Colonic mucosa (tissue), 4 donors: ENCODE measurements at regions of chr15 and their contacts with region 1.

Region 1: GRCh38 chr15:92097474-92098178 is 244.1 kb downstream of the SLCO3A1 start:
- DNase-seq: peak; percentile 60
- H3K4me3 ChIP-seq: no peak overlapping the region
- H3K27ac ChIP-seq: no peak overlapping the region
- H3K4me1 ChIP-seq: no peaks in the 10 kb centered on the region
- H3K27me3 ChIP-seq: no peaks in the 10 kb centered on the region
- CTCF ChIP-seq: peak; percentile 64

Region 2: DNA sequence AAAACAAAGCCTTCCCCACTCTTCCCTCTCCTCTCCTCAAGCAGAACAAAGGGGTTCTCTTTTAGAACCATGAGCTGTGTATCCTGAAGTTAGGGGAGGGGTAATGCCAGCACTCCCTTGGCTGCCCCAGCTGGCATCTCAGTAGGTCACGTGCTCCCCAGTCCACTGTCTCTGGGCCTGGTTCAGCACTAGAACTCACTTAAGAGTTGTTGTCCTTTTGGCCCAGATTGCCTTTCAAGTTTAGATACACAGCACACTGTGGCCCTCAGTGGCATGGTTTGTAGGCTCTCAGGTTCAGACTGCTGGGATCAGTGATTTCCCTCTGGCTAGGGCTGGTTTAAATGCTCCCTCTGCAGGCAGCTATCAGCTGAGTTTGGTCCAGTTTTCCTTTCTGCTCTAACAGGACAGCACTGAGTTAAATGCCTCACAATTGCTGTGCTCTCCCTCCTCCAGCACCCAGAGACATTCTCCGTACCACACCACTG is 107.7 kb after region 1 on chr15:
- intact Hi-C with region 1: loop called (anchors 5 kb)
- DNase-seq: no peak
- H3K4me3 ChIP-seq: no peak overlapping the region
- H3K27ac ChIP-seq: no peak overlapping the region
- H3K4me1 ChIP-seq: no peaks in the 10 kb centered on the region
- H3K27me3 ChIP-seq: no peaks in the 10 kb centered on the region
- CTCF ChIP-seq: no peak

Region 3: DNA sequence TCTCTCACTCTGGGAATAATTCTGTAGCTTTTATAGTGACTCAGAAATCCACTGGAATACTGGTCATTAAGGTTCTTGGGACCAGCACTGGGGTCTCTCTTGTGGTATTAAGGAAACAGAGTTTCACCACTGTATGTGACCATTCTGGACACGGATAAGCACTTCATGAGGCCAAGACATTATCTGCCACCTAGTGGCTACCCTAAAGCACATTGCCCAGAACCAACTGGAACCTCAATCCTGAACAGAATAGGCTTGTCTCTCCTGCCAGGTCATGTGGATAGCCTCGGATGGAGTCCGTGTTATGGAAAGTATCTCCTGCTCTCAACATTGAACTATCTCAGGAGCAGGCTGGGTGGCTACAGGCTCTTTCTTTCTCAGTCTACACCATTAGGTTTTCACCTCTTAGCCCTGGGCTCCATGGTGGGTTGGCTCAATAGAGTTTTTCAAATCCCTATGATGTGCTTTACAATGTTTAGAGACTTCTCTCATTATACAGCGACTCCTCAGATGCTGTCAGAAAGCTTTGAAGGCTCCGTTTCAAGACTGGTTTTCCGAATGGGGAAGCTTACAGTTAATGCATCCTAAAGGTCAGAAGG is 128.5 kb after region 1 on chr15:
- intact Hi-C with region 1: loop called (anchors 5 kb)
- DNase-seq: no peak
- H3K4me3 ChIP-seq: no peak overlapping the region
- H3K27ac ChIP-seq: no peak overlapping the region
- H3K4me1 ChIP-seq: no peaks in the 10 kb centered on the region
- H3K27me3 ChIP-seq: no peaks in the 10 kb centered on the region
- CTCF ChIP-seq: peak; percentile 48

Region 4: DNA sequence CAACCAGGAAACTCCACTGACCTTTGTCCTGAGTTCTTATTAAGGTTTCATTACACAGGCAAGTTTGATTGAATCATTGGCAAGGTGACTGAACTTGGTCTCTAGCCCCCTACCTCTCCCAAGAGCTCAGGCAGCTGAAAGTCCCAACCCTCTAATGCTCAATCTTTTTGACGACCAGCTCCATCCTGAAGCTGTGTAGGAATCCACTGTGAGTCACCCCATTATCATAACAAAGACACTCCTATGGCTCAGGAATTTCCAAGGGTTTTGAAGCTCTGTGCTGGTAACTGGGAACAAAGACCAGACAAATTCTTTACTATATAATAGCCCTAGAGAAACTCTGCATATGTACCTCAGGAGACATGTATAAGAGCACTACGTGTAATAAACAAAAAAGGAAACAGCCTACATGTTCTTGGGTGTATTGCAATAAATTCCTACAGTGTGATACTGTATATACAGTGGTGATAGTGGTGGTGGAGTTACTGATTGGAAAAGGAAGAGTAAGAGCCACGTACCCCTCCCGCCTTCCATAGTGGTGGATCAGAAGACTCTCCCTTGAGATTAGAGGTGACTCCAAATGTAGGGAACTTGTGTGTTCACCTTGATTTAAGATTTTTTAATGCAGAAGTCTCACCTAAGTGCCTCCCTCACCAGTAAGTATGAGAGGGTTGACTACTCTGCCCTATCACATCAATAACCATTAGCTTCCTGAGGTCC is 412.7 kb after region 1 on chr15:
- intact Hi-C with region 1: no loop called
- DNase-seq: no peak
- H3K4me3 ChIP-seq: no peak overlapping the region
- H3K27ac ChIP-seq: no peak overlapping the region
- H3K4me1 ChIP-seq: no peaks in the 10 kb centered on the region
- H3K27me3 ChIP-seq: no peaks in the 10 kb centered on the region
- CTCF ChIP-seq: no peak